ENCODE measurements at regions of chr14 and their contacts with region 1.

Region 1: GRCh38 chr14:73728717-73729330 is 14.6 kb upstream of the PNMA1 start:
- DNase-seq: no peak
- ATAC-seq: peak; percentile 95
- H3K4me3 ChIP-seq: no peak overlapping the region
- H3K27ac ChIP-seq: no peak overlapping the region
- H3K4me1 ChIP-seq: no peaks in the 10 kb centered on the region
- H3K27me3 ChIP-seq: no peaks in the 10 kb centered on the region
- CTCF ChIP-seq: peak; percentile 90 to 95 (median 91)
- EP300 ChIP-seq: no peak
- POLR2A ChIP-seq: 0 out of 2 replicates have a peak, but pooled peaks have one; percentile 5
- RAD21 ChIP-seq: peak; percentile 95

Region 2: DNA sequence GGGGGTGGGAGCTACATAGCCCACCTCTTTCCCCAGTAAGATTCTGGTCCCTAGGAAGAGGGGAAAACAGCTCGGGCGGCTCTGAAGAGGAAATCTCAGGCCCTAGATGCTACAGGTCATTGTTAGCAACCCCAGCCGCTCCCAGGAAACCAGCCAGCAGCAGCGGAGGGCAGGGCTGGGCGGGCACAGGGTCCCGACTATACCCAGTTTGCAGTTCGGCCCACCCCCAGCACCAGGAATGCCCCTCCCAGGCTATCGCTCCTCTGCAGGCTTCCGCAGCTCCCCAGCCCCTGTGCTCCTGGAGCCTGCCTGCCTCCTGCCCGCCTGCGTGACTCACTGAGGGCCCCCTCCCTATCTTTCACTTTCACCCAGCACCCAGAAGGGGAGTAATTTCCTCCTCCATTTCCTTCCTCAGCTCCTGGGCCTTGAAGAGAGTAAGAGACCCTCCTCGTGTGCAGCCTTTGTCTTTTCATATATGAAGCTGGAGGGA is 12.6 kb after region 1 on chr14:
- CTCF ChIA-PET with region 1: interaction called, 48 read pairs
- POLR2A ChIA-PET with region 1: interaction called, 9 read pairs
- RAD21 ChIA-PET with region 1: interaction called, 21 read pairs
- SMC1A ChIA-PET with region 1: interaction called, 32 read pairs
- in situ Hi-C with region 1: no loop called
- intact Hi-C with region 1: no loop called
- DNase-seq: no peak
- ATAC-seq: peak; percentile 60
- H3K4me3 ChIP-seq: peak overlapping the region; percentile 55
- H3K27ac ChIP-seq: peak overlapping the region; percentile 81
- H3K4me1 ChIP-seq: peaks cover 55% of the 10 kb centered on the region
- H3K27me3 ChIP-seq: no peaks in the 10 kb centered on the region
- CTCF ChIP-seq: no peak
- EP300 ChIP-seq: no peak
- POLR2A ChIP-seq: no peak
- RAD21 ChIP-seq: no peak

Region 3: GRCh38 chr14:73759714-73760597 is 31.1 kb after region 1 on chr14:
- CTCF ChIA-PET with region 1: interaction called, 34 read pairs
- POLR2A ChIA-PET with region 1: interaction called, 8 read pairs
- RAD21 ChIA-PET with region 1: interaction called, 19 read pairs
- SMC1A ChIA-PET with region 1: interaction called, 87 read pairs
- in situ Hi-C with region 1: no loop called
- intact Hi-C with region 1: loop called (anchors 1 kb)
- DNase-seq: peak; percentile 66
- ATAC-seq: peak; percentile 71
- H3K4me3 ChIP-seq: peak overlapping the region; percentile 83
- H3K27ac ChIP-seq: peak overlapping the region; percentile 100
- H3K4me1 ChIP-seq: peaks cover 63% of the 10 kb centered on the region
- H3K27me3 ChIP-seq: no peaks in the 10 kb centered on the region
- CTCF ChIP-seq: peak in 1 of 3 experiments; percentile 7; a peak in 1 of 6 replicates
- EP300 ChIP-seq: peak; percentile 48 to 58; a peak in 2 of 4 replicates
- POLR2A ChIP-seq: peak; percentile 97
- RAD21 ChIP-seq: no peak

Region 4: GRCh38 chr14:73785873-73786695 is 57.3 kb after region 1 on chr14:
- CTCF ChIA-PET with region 1: interaction called, 11 read pairs
- POLR2A ChIA-PET with region 1: no interaction called
- RAD21 ChIA-PET with region 1: interaction called, 17 read pairs
- SMC1A ChIA-PET with region 1: interaction called, 8 read pairs
- in situ Hi-C with region 1: no loop called
- intact Hi-C with region 1: loop called (anchors 2 kb)
- DNase-seq: no peak
- ATAC-seq: peak; percentile 75
- H3K4me3 ChIP-seq: peak overlapping the region; percentile 97
- H3K27ac ChIP-seq: peak overlapping the region; percentile 94
- H3K4me1 ChIP-seq: peaks cover 41% of the 10 kb centered on the region
- H3K27me3 ChIP-seq: no peaks in the 10 kb centered on the region
- CTCF ChIP-seq: no peak
- EP300 ChIP-seq: no peak
- POLR2A ChIP-seq: peak; percentile 81
- RAD21 ChIP-seq: no peak

Region 5: DNA sequence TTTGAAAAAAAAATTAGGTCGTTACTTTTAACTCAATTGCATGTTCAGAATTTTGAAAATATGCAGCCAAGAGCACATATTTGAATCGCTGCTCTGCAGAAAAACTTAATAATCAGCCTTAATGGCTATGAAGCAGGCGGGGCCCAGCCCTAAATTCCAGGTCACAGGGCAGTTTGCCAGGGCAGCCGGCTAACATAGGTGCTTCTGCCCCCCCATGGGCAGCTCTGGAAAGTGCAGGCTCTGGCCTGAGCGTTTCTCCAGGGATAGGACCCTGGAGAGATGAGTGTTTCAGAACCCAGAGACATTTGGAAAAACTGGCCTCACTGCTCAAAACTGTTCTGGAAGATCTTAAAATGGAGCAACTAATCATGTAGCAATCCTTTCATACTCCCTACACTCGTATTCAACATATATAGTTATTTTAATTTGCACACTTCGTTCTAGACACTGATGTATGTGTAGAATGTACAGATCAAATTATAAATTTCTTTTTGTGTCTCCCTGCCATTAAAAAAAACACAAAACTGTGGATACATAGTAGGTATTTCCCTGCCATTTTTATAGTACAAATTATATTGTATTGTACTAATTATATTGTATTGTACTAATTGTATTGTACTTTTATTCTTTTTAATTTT is 96.8 kb after region 1 on chr14:
- CTCF ChIA-PET with region 1: interaction called, 195 read pairs
- POLR2A ChIA-PET with region 1: no interaction called
- RAD21 ChIA-PET with region 1: interaction called, 97 read pairs
- SMC1A ChIA-PET with region 1: interaction called, 155 read pairs
- in situ Hi-C with region 1: no loop called
- intact Hi-C with region 1: loop called (anchors 1 kb)
- DNase-seq: peak; percentile 20
- ATAC-seq: peak; percentile 88
- H3K4me3 ChIP-seq: no peak overlapping the region
- H3K27ac ChIP-seq: no peak overlapping the region
- H3K4me1 ChIP-seq: peaks cover 11% of the 10 kb centered on the region
- H3K27me3 ChIP-seq: no peaks in the 10 kb centered on the region
- CTCF ChIP-seq: peak; percentile 89 to 95 (median 93)
- EP300 ChIP-seq: no peak
- POLR2A ChIP-seq: no peak
- RAD21 ChIP-seq: peak; percentile 95

Region 6: DNA sequence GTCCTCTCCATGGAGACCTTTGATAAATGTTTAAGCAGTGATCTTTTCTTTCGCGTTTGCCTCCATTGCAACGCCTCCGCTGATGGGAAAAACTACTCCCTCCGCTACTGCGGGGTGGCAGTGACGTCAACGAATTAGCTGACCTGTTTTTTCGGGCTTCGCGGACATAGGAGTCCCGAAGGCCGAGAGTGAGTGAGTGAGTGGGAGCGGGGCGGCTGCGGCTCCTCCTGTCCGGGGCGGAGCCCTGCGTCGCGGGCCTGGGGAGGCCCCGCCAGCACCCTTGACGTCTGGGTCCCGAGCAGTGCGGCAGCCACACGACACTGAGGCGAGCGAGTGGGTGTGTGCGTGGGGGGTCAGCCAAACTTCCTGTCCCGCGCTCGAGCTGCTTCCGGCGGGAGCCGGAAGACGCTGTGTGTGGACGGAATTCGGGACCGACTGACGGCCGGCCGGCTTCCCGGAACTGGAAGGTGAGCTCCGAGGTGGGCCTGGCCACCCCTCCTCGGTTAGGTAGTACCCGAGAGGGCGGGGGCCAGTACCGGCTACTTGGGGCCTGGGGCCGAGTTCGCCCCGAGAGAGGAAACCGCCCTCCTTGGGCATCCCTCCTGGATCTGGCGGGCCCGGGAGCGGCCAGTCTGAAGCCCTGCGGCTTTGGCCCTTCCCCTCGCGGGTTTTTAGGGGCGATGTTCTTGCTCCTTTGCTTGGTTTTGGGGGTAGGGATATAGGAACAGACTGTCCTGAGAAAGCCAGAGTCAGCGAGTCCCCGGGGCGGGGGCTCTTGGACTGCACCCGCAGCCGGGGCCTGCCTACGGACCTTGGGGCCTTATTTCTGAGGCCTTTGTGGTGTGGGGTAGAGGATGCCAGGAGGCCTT is 157.9 kb after region 1 on chr14 and contains the start of gene ZNF410:
- CTCF ChIA-PET with region 1: interaction called, 3 read pairs
- POLR2A ChIA-PET with region 1: no interaction called
- RAD21 ChIA-PET with region 1: interaction called, 3 read pairs
- SMC1A ChIA-PET with region 1: interaction called, 3 read pairs
- in situ Hi-C with region 1: no loop called
- intact Hi-C with region 1: loop called (anchors 5 kb)
- DNase-seq: peak; percentile 80
- ATAC-seq: peak; percentile 98
- H3K4me3 ChIP-seq: peak within 1 kb of the TSS; percentile 91
- H3K27ac ChIP-seq: peak within 1 kb of the TSS; percentile 83
- H3K4me1 ChIP-seq: peaks cover 11% of the 10 kb centered on the region
- H3K27me3 ChIP-seq: no peaks in the 10 kb centered on the region
- CTCF ChIP-seq: no peak
- EP300 ChIP-seq: peak; percentile 38 to 60; a peak in 2 of 4 replicates
- POLR2A ChIP-seq: peak; percentile 94
- RAD21 ChIP-seq: no peak
- polyA plus RNA-seq, gene ZNF410: 51.2 to 56.6 TPM

Measured in GM12878 (cell line).